ENCODE measurements at regions of chr17 and their contacts with region 1.

Region 1: DNA sequence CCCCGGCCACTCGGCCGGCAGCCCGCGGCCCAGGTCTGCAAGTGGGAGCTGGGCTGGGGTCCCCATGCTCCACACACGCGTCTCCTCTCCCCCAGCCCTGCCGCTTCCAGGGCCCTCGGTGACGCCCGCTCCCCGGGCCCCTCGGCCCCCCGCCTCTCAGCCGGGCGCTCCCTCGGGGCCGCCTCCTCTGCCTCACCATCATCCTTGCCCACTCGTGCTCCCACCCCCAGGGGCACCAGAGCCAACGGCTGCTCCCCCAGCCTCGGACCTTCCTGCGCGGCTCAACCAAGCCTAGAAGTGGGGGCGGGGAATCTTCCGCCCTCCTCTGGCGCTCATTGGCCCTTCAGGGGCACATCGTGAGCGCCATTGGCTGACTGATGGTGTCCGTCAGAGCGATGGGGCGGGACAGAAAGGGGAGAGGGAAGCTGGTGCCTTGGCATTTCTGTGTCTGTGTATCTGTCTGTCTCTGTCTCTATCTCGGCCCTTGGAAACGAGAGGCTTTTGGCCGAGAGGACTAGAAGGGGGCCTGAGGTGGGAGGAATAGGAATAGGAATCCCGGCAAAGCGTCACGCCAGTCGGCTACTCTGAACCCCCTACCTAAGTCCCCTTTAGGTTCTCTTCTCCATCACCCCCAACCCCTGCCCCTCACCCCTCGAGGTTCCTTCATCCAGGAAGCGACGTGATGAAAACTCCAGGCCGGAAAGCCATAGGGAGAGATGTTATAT is 88.9 kb downstream of the CDC27 start:
- DNase-seq: peak; percentile 90
- H3K4me3 Mint-ChIP-seq: peak overlapping the region; percentile 100
- H3K27ac Mint-ChIP-seq: peak overlapping the region; percentile 100
- H3K4me1 Mint-ChIP-seq: peaks cover 16% of the 10 kb centered on the region
- H3K27me3 Mint-ChIP-seq: no peaks in the 10 kb centered on the region

Region 2: DNA sequence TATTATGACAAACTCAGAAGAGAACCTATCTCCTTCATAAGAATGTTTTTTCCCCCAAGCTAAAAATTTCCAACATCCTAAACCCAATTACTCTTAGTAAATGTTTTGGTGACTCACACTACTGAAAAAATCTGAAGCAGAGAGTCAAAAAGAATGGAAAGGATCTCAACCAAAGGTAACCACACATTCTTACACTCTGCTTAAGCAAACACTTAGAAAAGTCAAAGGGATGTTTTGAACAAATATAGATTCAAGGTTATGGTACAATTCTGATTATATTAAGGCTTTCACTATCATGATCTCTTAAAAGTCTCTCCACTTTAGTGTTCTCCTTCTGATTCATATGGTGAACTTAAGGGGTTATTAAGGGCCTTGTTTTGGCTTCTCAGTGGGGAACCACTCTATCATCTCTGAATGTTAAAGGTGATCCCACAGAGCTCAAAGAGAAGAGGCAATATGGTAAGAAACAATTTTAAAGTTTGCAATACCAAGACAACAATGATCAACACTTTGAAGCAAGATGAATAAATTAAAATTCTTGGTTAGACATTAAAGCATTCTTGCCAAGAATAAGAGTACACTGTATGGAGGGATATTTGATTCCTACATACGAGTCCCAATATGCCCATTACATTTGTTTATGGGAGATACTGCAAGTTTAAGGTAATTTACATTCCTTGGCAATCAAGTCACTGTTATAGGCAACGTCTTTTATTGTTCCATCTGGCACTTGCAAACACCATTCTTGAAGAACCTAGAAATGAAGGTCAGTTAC is 19.8 kb after region 1 on chr17:
- intact Hi-C with region 1: loop called (anchors 2 kb)
- DNase-seq: no peak
- H3K4me3 Mint-ChIP-seq: no peak overlapping the region
- H3K27ac Mint-ChIP-seq: peak overlapping the region; percentile 80
- H3K4me1 Mint-ChIP-seq: peaks cover 13% of the 10 kb centered on the region
- H3K27me3 Mint-ChIP-seq: no peaks in the 10 kb centered on the region

Region 3: DNA sequence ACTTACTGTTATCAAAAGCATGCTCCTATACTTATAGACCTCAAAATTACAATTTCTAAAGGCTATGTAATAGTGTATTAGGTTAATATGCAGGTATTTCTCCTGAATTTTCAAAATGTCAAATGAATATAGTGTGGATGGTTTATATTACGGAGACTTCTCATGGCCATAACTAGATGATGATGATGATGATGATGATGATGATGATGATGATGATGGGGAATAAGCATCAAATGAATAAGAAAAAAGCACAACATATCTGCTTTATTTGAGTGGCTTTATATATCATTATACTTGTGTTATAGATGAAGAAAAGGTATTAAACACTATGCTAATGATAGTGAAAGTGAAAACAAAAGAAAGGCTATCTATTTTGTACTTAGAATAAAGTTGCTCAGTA is 35.1 kb after region 1 on chr17:
- intact Hi-C with region 1: loop called (anchors 5 kb)
- DNase-seq: no peak
- H3K4me3 Mint-ChIP-seq: no peak overlapping the region
- H3K27ac Mint-ChIP-seq: peak overlapping the region; percentile 8
- H3K4me1 Mint-ChIP-seq: peaks cover 8% of the 10 kb centered on the region
- H3K27me3 Mint-ChIP-seq: no peaks in the 10 kb centered on the region

Region 4: DNA sequence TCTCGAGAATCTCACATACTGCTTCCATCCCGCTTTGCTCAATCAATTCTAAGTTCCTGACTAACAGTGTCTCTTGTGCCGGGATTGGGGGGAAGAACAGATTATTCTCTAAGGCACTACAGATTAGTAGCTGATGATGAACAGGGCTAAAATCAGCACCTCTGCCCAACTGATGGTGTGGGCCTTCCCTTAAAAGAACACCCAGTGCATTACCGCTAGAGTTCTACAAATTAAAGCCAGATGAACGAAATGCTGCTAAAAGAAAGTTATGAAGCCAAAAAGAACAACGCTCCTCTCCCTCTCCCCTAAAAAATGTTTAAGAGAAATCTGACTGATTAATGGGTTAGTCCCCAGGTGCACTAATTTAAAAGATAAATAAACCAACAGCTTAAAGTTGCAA is 84.5 kb after region 1 on chr17:
- intact Hi-C with region 1: no loop called
- DNase-seq: no peak
- H3K4me3 Mint-ChIP-seq: no peak overlapping the region
- H3K27ac Mint-ChIP-seq: no peak overlapping the region
- H3K4me1 Mint-ChIP-seq: peaks cover 59% of the 10 kb centered on the region
- H3K27me3 Mint-ChIP-seq: no peaks in the 10 kb centered on the region

Measured in activated T-helper 1 cell treated with anti-CD3 and anti-CD28 coated beads, Interleukin-12 subunit alpha, Interleukin-12 subunit beta, Interleukin-2, Interleukin-4 antibody, amounts not matched to agents 30 ng/mL and 10 ng/mL and 1 ng/mL, durations not matched to agents 14 hours and 24 hours and 36 hours (primary cell).